Calu3 (cell line): ENCODE measurements at regions of chrX and their contacts with region 1.

Region 1: DNA sequence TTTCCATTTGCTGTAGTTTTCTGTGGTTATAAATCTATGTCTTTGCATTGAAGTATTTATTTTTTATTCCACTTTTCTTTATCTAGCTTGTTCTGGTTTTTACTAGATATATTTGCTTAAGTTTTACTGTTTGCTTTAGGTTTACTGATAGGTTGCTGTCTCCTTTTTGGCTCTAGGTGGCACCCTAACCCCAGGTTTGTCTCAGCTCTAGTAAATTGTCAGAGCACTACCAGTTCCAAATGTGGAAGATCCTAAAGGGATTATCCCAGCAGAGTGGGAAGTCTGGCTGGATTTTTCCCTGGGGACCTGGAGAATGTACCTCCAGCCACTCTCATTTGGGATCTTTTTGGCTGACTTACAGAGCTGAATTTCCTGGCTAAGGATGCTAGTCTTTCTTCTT is 106.1 kb downstream of the PBDC1 start:
- DNase-seq: peak; percentile 43
- H3K4me3 Mint-ChIP-seq: no peak overlapping the region
- H3K27ac Mint-ChIP-seq: no peak overlapping the region
- H3K4me1 Mint-ChIP-seq: no peaks in the 10 kb centered on the region
- H3K27me3 Mint-ChIP-seq: no peaks in the 10 kb centered on the region
- CTCF ChIP-seq: peak; percentile 46

Region 2: DNA sequence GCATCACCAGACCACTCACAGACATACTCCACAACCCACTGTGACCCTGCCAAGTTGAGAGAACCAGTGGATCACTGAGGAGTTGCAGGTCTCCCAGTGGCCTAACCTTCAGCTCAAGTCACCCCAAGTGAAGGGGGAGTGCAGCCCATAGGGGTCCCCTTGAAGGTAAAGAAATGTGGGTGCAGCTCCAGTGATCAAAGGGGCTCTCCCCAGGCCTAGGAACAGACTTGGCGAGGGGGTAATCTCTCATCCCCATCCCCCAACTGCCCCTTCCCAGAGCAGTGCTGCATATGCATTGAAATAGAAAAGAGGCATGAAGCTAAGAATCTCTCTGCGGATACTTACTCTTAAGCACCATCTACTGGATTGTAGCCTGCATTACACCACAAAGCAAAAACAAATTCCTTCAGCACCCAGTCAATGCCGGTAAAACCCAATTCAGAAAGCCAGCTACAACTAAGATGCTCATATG is 175.5 kb after region 1 on chrX:
- CTCF ChIA-PET with region 1: interaction called, 3 read pairs
- intact Hi-C with region 1: loop called (anchors 1 kb)
- DNase-seq: peak; percentile 5
- H3K4me3 Mint-ChIP-seq: no peak overlapping the region
- H3K27ac Mint-ChIP-seq: no peak overlapping the region
- H3K4me1 Mint-ChIP-seq: no peaks in the 10 kb centered on the region
- H3K27me3 Mint-ChIP-seq: no peaks in the 10 kb centered on the region
- CTCF ChIP-seq: no peak

Region 3: GRCh38 chrX:77597090-77597489 is 1318.1 kb after region 1 on chrX:
- CTCF ChIA-PET with region 1: no interaction called
- intact Hi-C with region 1: loop called (anchors 5 kb)
- DNase-seq: no peak
- H3K4me3 Mint-ChIP-seq: no peak overlapping the region
- H3K27ac Mint-ChIP-seq: no peak overlapping the region
- H3K4me1 Mint-ChIP-seq: no peaks in the 10 kb centered on the region
- H3K27me3 Mint-ChIP-seq: no peaks in the 10 kb centered on the region
- CTCF ChIP-seq: no peak